Right lobe of liver (tissue), 6 donors: ENCODE measurements at regions of chr12 and their contacts with region 1.

Region 1: GRCh38 chr12:111024205-111024801 is 103.9 kb upstream of the MYL2 start:
- DNase-seq: peak; percentile 78 to 79 (median 78)
- ATAC-seq: peak; percentile 96 to 99 (median 97)
- H3K4me3 ChIP-seq: no peak overlapping the region
- H3K27ac ChIP-seq: no peak overlapping the region
- H3K4me1 ChIP-seq: no peaks in the 10 kb centered on the region
- H3K27me3 ChIP-seq: no peaks in the 10 kb centered on the region
- CTCF ChIP-seq: peak; percentile 86 to 95 (median 90)
- POLR2A ChIP-seq: no peak

Region 2: DNA sequence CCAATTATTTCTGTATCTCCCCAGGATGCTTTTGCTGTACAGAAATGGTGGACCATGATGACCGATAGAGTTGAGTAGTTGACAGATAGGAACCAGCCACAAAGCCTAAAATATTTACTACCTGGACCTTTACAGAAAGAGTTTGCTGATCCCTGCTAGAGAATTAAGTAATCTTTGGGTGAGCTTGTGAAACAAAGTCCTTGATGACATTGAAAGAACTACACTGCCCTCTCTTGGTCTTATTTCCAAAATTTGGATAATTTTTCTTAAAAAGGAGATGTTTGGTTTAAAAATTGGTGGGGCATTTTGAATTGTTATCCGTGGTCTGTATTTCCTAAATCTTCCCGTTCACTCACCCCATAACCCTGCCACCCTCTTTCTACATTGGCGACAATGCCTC is 424.0 kb before region 1 on chr12:
- intact Hi-C with region 1: no loop called
- DNase-seq: no peak
- ATAC-seq: peak; percentile 84 to 90 (median 86)
- H3K4me3 ChIP-seq: no peak overlapping the region
- H3K27ac ChIP-seq: peak overlapping the region in 1 of 3 donors; percentile 1
- H3K4me1 ChIP-seq: peaks cover 0 to 10% (median 0%) of the 10 kb centered on the region in 4 donors
- H3K27me3 ChIP-seq: no peaks in the 10 kb centered on the region
- CTCF ChIP-seq: peak; percentile 50 to 71 (median 53)
- POLR2A ChIP-seq: no peak

Region 3: GRCh38 chr12:111166779-111167540 is 142.7 kb after region 1 on chr12:
- intact Hi-C with region 1: loop called (anchors 10 kb)
- DNase-seq: peak; percentile 79 to 92 (median 83)
- ATAC-seq: peak; percentile 82 to 89 (median 88)
- H3K4me3 ChIP-seq: no peak overlapping the region
- H3K27ac ChIP-seq: no peak overlapping the region
- H3K4me1 ChIP-seq: peaks cover 0 to 8% (median 0%) of the 10 kb centered on the region in 4 donors
- H3K27me3 ChIP-seq: no peaks in the 10 kb centered on the region
- CTCF ChIP-seq: no peak
- POLR2A ChIP-seq: no peak

Region 4: GRCh38 chr12:111174251-111174960 is 150.1 kb after region 1 on chr12:
- intact Hi-C with region 1: loop called (anchors 10 kb)
- DNase-seq: no peak
- ATAC-seq: peak; percentile 36 to 57 (median 51)
- H3K4me3 ChIP-seq: no peak overlapping the region
- H3K27ac ChIP-seq: no peak overlapping the region
- H3K4me1 ChIP-seq: peaks cover 0 to 5% (median 2%) of the 10 kb centered on the region in 4 donors
- H3K27me3 ChIP-seq: no peaks in the 10 kb centered on the region
- CTCF ChIP-seq: peak; percentile 24 to 50 (median 38)
- POLR2A ChIP-seq: no peak

Region 5: DNA sequence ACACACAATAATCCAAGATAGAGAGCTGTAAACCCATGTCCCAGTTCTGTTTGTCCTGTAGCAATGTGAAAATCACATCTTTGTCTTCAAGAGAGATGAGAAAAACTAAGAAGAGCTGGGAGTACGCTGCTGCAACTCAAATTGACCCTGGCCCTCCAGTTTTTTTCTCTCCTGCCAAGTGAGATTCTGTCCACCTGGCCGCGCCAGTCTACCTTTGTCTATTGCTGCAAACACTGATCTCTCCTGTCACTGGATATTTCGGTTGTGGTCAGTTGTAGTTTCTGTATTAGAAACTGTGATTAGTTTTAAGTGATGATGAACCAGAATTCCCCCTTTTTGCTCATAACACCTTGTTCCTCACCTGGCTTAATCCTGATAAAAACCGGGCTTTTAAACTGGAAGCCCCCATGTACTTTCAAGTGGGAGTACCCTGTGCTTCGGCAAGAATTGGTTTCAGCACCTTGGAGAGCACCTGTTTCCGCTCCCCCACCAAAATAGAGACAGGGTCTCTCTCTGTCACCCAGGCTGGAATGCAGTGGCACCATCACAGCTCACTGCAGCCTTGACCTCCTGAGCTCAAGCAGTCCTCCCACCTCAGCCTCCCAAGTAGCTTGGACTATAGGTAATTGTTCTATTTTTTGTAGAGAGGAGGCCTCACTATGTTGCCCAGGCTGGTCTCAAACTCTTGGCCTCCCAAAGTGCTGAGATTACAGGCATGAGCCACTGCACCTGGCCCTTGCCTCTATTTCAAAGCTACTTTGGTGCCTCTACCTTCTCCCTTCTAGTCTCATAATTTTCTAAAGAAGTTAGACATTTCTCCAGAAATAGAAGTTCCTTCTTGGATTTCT is 187.8 kb after region 1 on chr12:
- intact Hi-C with region 1: no loop called
- DNase-seq: no peak
- ATAC-seq: no peak
- H3K4me3 ChIP-seq: no peak overlapping the region
- H3K27ac ChIP-seq: no peak overlapping the region
- H3K4me1 ChIP-seq: no peaks in the 10 kb centered on the region
- H3K27me3 ChIP-seq: no peaks in the 10 kb centered on the region
- CTCF ChIP-seq: no peak
- POLR2A ChIP-seq: no peak

Region 6: GRCh38 chr12:111313833-111314259 is 289.5 kb after region 1 on chr12:
- intact Hi-C with region 1: loop called (anchors 5 kb)
- DNase-seq: peak; percentile 74 to 79 (median 76)
- ATAC-seq: peak; percentile 74 to 86 (median 80)
- H3K4me3 ChIP-seq: no peak overlapping the region
- H3K27ac ChIP-seq: no peak overlapping the region
- H3K4me1 ChIP-seq: no peaks in the 10 kb centered on the region
- H3K27me3 ChIP-seq: no peaks in the 10 kb centered on the region
- CTCF ChIP-seq: peak; percentile 84 to 98 (median 94)
- POLR2A ChIP-seq: no peak